Activated T-helper 1 cell treated with anti-CD3 and anti-CD28 coated beads, Interleukin-12 subunit alpha, Interleukin-12 subunit beta, Interleukin-2, Interleukin-4 antibody, amounts not matched to agents 30 ng/mL and 10 ng/mL and 1 ng/mL, durations not matched to agents 14 hours and 24 hours and 36 hours (primary cell): ENCODE measurements at regions of chr10 and their contacts with region 1.

Region 1: GRCh38 chr10:28628184-28628893 is 49.0 kb upstream of the BAMBI start:
- DNase-seq: peak; percentile 42
- H3K4me3 Mint-ChIP-seq: no peak overlapping the region
- H3K27ac Mint-ChIP-seq: no peak overlapping the region
- H3K4me1 Mint-ChIP-seq: peaks cover 5% of the 10 kb centered on the region
- H3K27me3 Mint-ChIP-seq: peaks cover 14% of the 10 kb centered on the region

Region 2: GRCh38 chr10:28432210-28432676 is 196.1 kb before region 1 on chr10:
- intact Hi-C with region 1: loop called (anchors 1 kb)
- DNase-seq: no peak
- H3K4me3 Mint-ChIP-seq: no peak overlapping the region
- H3K27ac Mint-ChIP-seq: no peak overlapping the region
- H3K4me1 Mint-ChIP-seq: peaks cover 8% of the 10 kb centered on the region
- H3K27me3 Mint-ChIP-seq: peaks cover 2% of the 10 kb centered on the region

Region 3: DNA sequence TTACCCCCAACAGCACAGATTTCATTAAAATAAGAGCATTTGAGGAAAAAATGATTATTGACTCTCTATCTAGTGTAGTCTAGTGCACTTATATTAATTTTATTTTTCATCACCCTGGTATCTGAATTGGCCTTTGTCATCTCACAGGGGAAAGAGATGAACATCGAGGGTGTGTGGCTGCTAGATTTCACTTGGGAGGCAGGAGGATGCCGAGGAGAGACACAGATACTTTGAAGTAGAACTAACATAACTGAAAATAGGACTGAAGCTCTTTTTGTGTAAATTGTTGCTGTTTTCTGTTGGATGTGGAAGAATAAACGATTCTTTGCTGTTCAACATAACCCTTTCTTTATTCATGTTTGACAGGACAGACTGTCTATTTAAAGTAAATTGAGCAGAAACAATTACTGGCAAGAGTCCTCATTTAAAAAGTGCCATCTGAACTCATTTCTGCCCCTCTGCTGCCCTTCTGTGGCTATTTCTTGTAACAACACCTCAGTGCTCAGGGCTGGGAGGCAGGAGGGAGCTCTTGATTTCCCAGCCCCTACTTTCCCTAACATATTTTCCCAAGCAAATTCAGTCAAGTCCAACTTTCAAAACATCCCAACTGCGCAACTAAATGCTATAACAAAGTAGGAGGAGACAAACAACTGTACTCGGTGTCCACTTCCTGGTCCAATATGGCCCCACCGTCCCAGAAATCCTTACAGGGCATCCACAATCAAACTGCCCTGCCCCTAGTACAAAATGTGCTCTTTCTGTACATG is 676.1 kb after region 1 on chr10:
- intact Hi-C with region 1: loop called (anchors 1 kb)
- DNase-seq: no peak
- H3K4me3 Mint-ChIP-seq: no peak overlapping the region
- H3K27ac Mint-ChIP-seq: no peak overlapping the region
- H3K4me1 Mint-ChIP-seq: no peaks in the 10 kb centered on the region
- H3K27me3 Mint-ChIP-seq: peaks cover 2% of the 10 kb centered on the region